Endothelial cell of umbilical vein (primary cell): ENCODE measurements at regions of chr10 and their contacts with region 1.

Region 1: GRCh38 chr10:132536971-132537712 is 445 bp upstream of the INPP5A start:
- DNase-seq: peak; percentile 99
- H3K4me3 ChIP-seq: peak overlapping the region; percentile 43 to 58 (median 45)
- H3K27ac ChIP-seq: peak overlapping the region; percentile 71
- H3K4me1 ChIP-seq: peaks cover 33% of the 10 kb centered on the region
- H3K27me3 ChIP-seq: no peaks in the 10 kb centered on the region
- CTCF ChIP-seq: peak in 1 of 2 donors; percentile 38
- POLR2A ChIP-seq: no peak

Region 2: DNA sequence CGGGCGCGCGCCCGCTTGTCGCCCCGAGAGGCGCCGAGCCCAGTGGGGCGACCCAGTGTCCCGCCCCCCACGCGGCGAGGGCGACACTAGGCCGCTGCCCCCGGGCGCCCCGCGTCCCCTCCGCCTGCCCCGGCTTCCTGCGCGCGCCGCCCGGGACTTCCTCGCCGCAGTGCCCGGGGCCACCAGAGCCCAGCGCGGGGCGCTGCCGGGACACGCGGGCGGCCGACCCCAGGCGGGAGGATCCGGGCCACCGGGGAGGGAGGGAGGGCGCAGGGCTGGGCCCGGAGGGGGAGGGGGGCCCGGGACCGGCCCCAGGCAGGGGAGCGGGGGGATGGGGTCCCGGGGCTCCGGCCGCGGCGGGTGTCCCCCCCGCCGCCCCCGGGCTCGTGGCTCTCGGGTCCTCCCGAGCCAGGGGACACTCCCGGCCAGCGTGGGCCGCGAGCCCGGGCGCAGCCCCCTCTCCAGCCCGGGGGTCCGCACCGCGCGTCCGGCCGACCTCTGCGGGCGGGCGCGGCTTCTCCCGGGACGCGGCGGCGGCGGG is 140.6 kb before region 1 on chr10:
- CTCF ChIA-PET with region 1: no interaction called
- POLR2A ChIA-PET with region 1: interaction called, 3 read pairs
- dilution Hi-C with region 1: no loop called
- intact Hi-C with region 1: loop called (anchors 2 kb)
- DNase-seq: no peak
- H3K4me3 ChIP-seq: peak overlapping the region in 1 of 3 experiments; percentile 47
- H3K27ac ChIP-seq: no peak overlapping the region
- H3K4me1 ChIP-seq: peaks cover 13% of the 10 kb centered on the region
- H3K27me3 ChIP-seq: no peaks in the 10 kb centered on the region
- CTCF ChIP-seq: peak in 1 of 2 donors; percentile 10
- POLR2A ChIP-seq: no peak

Region 3: GRCh38 chr10:132516771-132517725 is 20.1 kb before region 1 on chr10:
- CTCF ChIA-PET with region 1: no interaction called
- POLR2A ChIA-PET with region 1: no interaction called
- dilution Hi-C with region 1: no loop called
- intact Hi-C with region 1: loop called (anchors 1 kb)
- DNase-seq: peak; percentile 71
- H3K4me3 ChIP-seq: no peak overlapping the region
- H3K27ac ChIP-seq: peak overlapping the region; percentile 52
- H3K4me1 ChIP-seq: peaks cover 11% of the 10 kb centered on the region
- H3K27me3 ChIP-seq: no peaks in the 10 kb centered on the region
- CTCF ChIP-seq: no peak
- POLR2A ChIP-seq: no peak

Region 4: GRCh38 chr10:132588301-132589013 is 51.3 kb after region 1 on chr10:
- CTCF ChIA-PET with region 1: interaction called, 3 read pairs
- POLR2A ChIA-PET with region 1: interaction called, 3 read pairs
- dilution Hi-C with region 1: no loop called
- intact Hi-C with region 1: loop called (anchors 1 kb)
- DNase-seq: peak; percentile 92
- H3K4me3 ChIP-seq: peak overlapping the region in 1 of 3 experiments; percentile 14
- H3K27ac ChIP-seq: peak overlapping the region; percentile 31
- H3K4me1 ChIP-seq: peaks cover 39% of the 10 kb centered on the region
- H3K27me3 ChIP-seq: no peaks in the 10 kb centered on the region
- CTCF ChIP-seq: no peak
- POLR2A ChIP-seq: no peak